ENCODE measurements at regions of chr5 and their contacts with region 1.

Region 1: DNA sequence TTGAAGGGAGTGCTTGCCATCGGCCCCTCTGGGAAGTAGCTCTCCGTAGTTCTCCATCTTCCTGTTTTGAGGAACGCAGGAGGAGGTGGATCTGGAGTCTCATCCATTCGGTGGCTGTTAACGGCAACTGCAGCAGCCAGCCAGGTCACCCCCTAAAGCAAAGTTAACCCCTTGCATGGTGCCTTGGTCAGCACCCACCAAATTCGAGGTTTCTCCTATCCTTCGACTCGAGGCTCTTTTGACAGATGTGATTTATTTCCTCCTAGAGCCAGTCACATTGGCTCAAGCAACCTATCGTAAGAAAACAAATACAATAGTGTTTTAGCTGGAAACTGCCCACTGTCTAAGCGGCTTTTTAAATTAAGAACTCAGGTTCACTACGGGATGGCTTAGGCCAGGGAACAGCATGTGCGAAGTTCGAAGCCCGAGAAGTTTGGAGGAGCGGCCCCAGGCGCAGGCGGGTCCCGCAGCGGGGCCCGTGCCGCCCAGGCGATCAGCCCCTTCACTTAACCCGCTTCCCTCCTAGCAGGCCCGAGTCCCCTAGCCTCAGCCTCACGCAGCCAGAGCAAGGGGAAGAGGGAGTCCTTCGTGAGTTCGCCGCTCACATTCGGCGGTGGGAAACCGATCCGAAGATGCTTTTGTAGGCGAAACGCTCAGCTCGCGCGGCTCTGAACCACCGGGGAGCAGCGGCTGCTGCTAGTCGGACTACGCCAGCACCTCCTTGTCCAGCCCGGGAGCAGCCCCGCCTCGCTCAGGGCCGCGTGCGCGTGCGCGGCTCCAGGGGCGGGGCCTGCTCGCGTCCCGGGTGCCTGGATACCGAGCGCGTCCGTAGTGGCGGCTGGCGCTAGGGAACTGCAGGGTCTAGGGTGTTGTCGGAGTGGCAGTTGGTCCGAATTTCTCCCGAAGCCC is at the start of gene ROPN1L:
- DNase-seq: peak; percentile 74
- H3K4me3 Mint-ChIP-seq: peak within 1 kb of the TSS; percentile 74
- H3K27ac Mint-ChIP-seq: no peak within 1 kb of the TSS
- H3K4me1 Mint-ChIP-seq: peaks cover 32% of the 10 kb centered on the region
- H3K27me3 Mint-ChIP-seq: peaks cover 2% of the 10 kb centered on the region
- total RNA-seq, gene ROPN1L: not detected

Region 2: DNA sequence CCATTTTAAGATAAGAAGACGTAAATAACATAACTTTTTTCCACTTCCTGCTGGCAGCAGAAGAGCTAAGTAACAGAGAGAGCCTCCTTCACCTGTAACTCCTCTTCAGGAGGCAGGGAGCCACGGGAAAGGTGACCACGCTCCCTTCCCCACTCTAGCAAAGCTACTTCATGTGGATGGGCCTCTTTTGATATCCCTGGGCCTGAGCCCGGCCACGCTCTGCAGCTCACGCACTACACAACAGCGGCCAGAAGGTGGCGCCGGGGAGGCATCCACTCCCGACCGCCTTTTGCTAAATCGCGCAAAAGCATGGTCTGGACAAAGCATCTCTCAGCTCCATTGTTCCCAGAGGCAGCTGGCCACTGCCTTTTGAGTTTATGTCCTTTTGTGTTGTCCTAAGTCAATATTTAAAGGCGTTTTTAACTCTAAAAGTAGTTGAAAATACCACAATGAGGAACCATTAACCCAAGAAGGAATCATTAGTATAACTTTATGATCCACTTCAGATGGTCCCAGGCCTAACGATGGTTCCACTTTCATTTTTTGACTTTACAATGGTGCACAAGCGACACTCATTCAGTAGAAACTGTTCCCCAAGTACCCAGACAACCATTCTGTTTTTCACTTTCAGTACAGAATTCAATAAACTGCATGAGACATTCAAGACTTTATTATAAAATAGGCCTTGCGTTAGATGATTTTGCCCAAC is 157.3 kb before region 1 on chr5:
- CTCF ChIA-PET with region 1: interaction called, 10 read pairs
- intact Hi-C with region 1: loop called (anchors 1 kb)
- DNase-seq: peak; percentile 82
- H3K4me3 Mint-ChIP-seq: no peak overlapping the region
- H3K27ac Mint-ChIP-seq: no peak overlapping the region
- H3K4me1 Mint-ChIP-seq: peaks cover 7% of the 10 kb centered on the region
- H3K27me3 Mint-ChIP-seq: peaks cover 2% of the 10 kb centered on the region

Region 3: GRCh38 chr5:10424124-10424731 is 17.1 kb before region 1 on chr5:
- CTCF ChIA-PET with region 1: interaction called, 3 read pairs
- intact Hi-C with region 1: loop called (anchors 2 kb)
- DNase-seq: peak; percentile 43
- H3K4me3 Mint-ChIP-seq: no peak overlapping the region
- H3K27ac Mint-ChIP-seq: no peak overlapping the region
- H3K4me1 Mint-ChIP-seq: peaks cover 35% of the 10 kb centered on the region
- H3K27me3 Mint-ChIP-seq: no peaks in the 10 kb centered on the region

Region 4: DNA sequence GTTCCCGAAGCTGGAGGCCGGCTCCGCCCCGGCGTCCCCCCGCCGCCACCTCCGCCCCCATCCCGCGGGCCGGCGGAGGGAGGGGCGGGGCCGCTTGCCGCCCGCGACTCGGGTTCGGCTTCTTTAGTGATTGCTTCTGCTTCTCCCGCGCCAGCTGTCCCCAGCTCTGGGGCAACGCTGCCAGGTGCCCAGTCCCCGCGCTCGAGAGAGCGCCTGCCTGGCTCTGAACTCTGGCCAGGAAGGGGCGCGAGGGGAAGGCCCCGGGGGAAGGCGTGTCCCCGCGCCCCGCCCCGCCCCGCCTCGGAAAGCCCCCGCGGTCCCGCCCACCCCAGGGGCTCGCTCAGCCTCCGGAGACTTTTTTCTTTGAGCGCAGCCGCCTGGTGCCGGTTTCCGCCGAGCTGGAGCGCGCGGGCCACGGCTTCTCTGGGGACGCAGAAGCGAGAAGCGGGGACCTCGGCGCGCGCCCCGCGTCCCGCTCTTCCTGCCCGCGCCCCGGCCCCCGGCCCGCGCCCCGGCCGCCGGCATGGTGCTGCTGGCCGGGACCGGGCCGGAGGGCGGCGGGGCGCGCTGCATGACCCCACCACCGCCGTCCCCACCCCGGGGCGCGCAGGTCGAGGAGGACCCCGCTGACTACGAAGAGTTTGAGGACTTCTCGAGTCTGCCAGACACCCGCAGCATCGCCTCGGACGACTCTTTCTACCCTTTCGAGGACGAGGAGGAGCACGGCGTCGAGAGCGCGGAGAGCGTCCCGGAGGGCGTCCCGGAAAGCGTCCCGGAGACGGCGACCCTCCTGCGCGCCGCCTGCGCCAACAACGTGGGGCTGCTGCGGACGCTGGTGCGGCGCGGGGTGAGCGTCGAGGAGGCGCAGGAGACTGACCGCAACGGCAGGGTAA is 122.9 kb after region 1 on chr5 and contains the start of gene ANKRD33B:
- CTCF ChIA-PET with region 1: no interaction called
- intact Hi-C with region 1: loop called (anchors 1 kb)
- DNase-seq: peak; percentile 85
- H3K4me3 Mint-ChIP-seq: peak within 1 kb of the TSS; percentile 84
- H3K27ac Mint-ChIP-seq: peak within 1 kb of the TSS; percentile 78
- H3K4me1 Mint-ChIP-seq: peaks cover 15% of the 10 kb centered on the region
- H3K27me3 Mint-ChIP-seq: peaks cover 20% of the 10 kb centered on the region
- total RNA-seq, gene ANKRD33B: 1.9 to 2.5 TPM

Region 5: GRCh38 chr5:10635257-10635866 is 194.0 kb after region 1 on chr5:
- CTCF ChIA-PET with region 1: no interaction called
- intact Hi-C with region 1: loop called (anchors 5 kb)
- DNase-seq: peak; percentile 93
- H3K4me3 Mint-ChIP-seq: peak overlapping the region; percentile 13
- H3K27ac Mint-ChIP-seq: peak overlapping the region; percentile 79
- H3K4me1 Mint-ChIP-seq: peaks cover 56% of the 10 kb centered on the region
- H3K27me3 Mint-ChIP-seq: no peaks in the 10 kb centered on the region

Region 6: DNA sequence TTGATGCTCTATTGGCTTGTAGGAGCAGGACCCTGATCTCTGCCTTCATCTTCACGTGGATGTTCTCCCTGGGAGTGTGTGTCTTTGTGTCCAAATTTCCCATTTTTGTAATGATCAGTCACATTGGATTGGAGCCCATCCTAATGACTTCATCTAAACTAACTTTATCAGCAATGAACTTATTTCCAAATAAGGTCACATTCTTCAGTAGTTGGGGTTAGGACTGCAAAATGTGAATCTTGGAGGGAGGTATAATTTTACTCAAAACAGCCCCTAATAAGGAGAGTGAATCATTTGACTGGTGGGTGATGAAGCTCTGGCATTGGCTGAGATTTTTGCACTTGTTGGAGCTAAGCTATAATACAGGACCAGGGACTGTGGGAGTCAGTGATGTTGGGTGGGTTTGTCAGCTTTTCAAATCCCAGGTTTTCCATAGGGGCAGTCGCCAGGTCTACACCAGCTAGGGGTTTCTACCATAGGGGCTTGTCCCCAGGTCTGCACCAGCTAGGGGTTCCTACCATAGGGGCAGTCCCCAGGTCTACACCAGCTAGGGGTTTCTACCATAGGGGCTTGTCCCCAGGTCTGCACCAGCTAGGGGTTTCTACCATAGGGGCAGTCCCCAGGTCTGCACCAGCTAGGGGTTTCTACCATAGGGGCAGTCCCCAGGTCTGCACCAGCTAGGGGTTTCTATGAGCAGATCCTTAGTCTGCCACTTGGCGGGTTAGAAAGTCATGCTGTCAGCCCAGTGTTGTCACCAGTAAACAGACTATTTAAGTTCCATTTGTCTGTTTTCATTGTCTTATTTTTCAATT is 702.3 kb after region 1 on chr5:
- CTCF ChIA-PET with region 1: no interaction called
- intact Hi-C with region 1: loop called (anchors 10 kb)
- DNase-seq: peak; percentile 91
- H3K4me3 Mint-ChIP-seq: no peak overlapping the region
- H3K27ac Mint-ChIP-seq: no peak overlapping the region
- H3K4me1 Mint-ChIP-seq: peaks cover 9% of the 10 kb centered on the region
- H3K27me3 Mint-ChIP-seq: peaks cover 21% of the 10 kb centered on the region